Spleen (tissue), 13 donors: ENCODE measurements at regions of chr11 and their contacts with region 1.

Region 1: GRCh38 chr11:75022759-75023396 is 34.1 kb downstream of the NEU3 start:
- DNase-seq: peak; percentile 89
- H3K4me3 ChIP-seq: no peak overlapping the region
- H3K27ac ChIP-seq: no peak overlapping the region
- H3K4me1 ChIP-seq: peaks cover 0 to 9% (median 1%) of the 10 kb centered on the region in 6 donors
- H3K27me3 ChIP-seq: no peaks in the 10 kb centered on the region
- CTCF ChIP-seq: peak; percentile 86 to 99 (median 98)
- POLR2A ChIP-seq: no peak

Region 2: GRCh38 chr11:75133976-75134375 is 111.1 kb after region 1 on chr11:
- intact Hi-C with region 1: loop called (anchors 10 kb)
- DNase-seq: no peak
- H3K4me3 ChIP-seq: no peak overlapping the region
- H3K27ac ChIP-seq: no peak overlapping the region
- H3K4me1 ChIP-seq: no peaks in the 10 kb centered on the region
- H3K27me3 ChIP-seq: peaks cover 0 to 42% (median 0%) of the 10 kb centered on the region in 7 donors
- CTCF ChIP-seq: no peak
- POLR2A ChIP-seq: no peak

Region 3: GRCh38 chr11:75249704-75250103 is 226.8 kb after region 1 on chr11:
- intact Hi-C with region 1: loop called (anchors 5 kb)
- DNase-seq: peak; percentile 29
- H3K4me3 ChIP-seq: no peak overlapping the region
- H3K27ac ChIP-seq: no peak overlapping the region
- H3K4me1 ChIP-seq: peaks cover 0 to 10% (median 6%) of the 10 kb centered on the region in 6 donors
- H3K27me3 ChIP-seq: peaks cover 0 to 25% (median 0%) of the 10 kb centered on the region in 7 donors
- CTCF ChIP-seq: no peak
- POLR2A ChIP-seq: no peak